GM12878 (cell line): ENCODE measurements at regions of chr9 and their contacts with region 1.

Region 1: GRCh38 chr9:12730927-12731326 is 37.7 kb downstream of the TYRP1 start:
- DNase-seq: no peak
- ATAC-seq: no peak
- H3K4me3 ChIP-seq: no peak overlapping the region
- H3K27ac ChIP-seq: no peak overlapping the region
- H3K4me1 ChIP-seq: no peaks in the 10 kb centered on the region
- H3K27me3 ChIP-seq: no peaks in the 10 kb centered on the region
- CTCF ChIP-seq: no peak
- EP300 ChIP-seq: no peak
- POLR2A ChIP-seq: no peak
- RAD21 ChIP-seq: no peak

Region 2: DNA sequence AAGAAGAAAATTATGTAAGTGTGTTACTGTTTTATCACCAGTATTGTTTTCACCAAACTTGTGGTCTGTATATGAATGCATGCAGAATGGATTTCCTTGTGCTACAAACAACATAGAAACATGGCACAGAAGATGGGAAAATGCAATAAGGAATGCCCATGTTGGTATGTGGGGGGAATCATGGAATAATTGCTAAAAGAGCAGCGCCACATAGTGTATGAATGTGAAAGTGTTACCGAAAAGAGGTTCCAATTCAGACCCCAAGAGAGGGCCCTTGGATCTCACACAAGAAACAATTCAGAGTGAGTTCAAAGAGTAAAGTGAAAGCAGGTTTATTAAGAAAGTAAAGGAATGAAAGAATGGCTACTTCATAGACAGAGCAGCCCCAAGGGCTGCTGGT is 64.1 kb before region 1 on chr9:
- CTCF ChIA-PET with region 1: no interaction called
- POLR2A ChIA-PET with region 1: no interaction called
- RAD21 ChIA-PET with region 1: no interaction called
- SMC1A ChIA-PET with region 1: no interaction called
- in situ Hi-C with region 1: no loop called
- intact Hi-C with region 1: no loop called
- DNase-seq: no peak
- ATAC-seq: no peak; the same call in 2 of the 3 replicates
- H3K4me3 ChIP-seq: no peak overlapping the region
- H3K27ac ChIP-seq: no peak overlapping the region
- H3K4me1 ChIP-seq: no peaks in the 10 kb centered on the region
- H3K27me3 ChIP-seq: no peaks in the 10 kb centered on the region
- CTCF ChIP-seq: no peak; a peak in 2 of 6 replicates
- EP300 ChIP-seq: no peak
- POLR2A ChIP-seq: no peak
- RAD21 ChIP-seq: 0 out of 2 replicates have a peak, but pooled peaks have one; percentile 12

Region 3: GRCh38 chr9:12819436-12820185 is 88.7 kb after region 1 on chr9:
- CTCF ChIA-PET with region 1: interaction called, 4 read pairs
- POLR2A ChIA-PET with region 1: no interaction called
- RAD21 ChIA-PET with region 1: no interaction called
- SMC1A ChIA-PET with region 1: interaction called, 38 read pairs
- in situ Hi-C with region 1: no loop called
- intact Hi-C with region 1: no loop called
- DNase-seq: no peak
- ATAC-seq: peak; percentile 88
- H3K4me3 ChIP-seq: no peak overlapping the region
- H3K27ac ChIP-seq: no peak overlapping the region
- H3K4me1 ChIP-seq: no peaks in the 10 kb centered on the region
- H3K27me3 ChIP-seq: no peaks in the 10 kb centered on the region
- CTCF ChIP-seq: peak; percentile 45 to 68 (median 55)
- EP300 ChIP-seq: no peak
- POLR2A ChIP-seq: no peak
- RAD21 ChIP-seq: peak; percentile 47; the same call in 1 of the 2 replicates